Dorsolateral prefrontal cortex (tissue), 120 donors: ENCODE measurements at regions of chr13 and their contacts with region 1.

Region 1: DNA sequence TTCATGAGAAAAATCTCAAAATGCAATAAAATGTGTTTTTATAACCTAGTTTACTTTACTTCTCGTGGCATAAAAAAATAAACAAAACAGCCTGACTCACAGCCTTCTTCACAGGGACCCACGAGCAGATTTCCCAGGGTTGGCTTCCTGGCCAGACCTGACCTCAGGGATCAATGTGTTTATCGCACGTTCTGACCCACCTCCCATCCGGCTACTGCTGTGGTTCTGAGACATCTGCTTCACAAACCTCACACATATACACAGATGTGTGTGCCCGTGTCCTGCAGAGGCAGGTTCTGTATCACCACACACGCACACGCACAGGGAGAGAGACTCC is 118.3 kb downstream of the COL4A2 start:
- DNase-seq: no peak
- H3K4me3 ChIP-seq: no peak overlapping the region
- H3K27ac ChIP-seq: peak overlapping the region in 4 of 59 donors; percentile 4 to 42 (median 30)
- H3K27me3 ChIP-seq: no peaks in the 10 kb centered on the region
- CTCF ChIP-seq: no peak

Region 2: DNA sequence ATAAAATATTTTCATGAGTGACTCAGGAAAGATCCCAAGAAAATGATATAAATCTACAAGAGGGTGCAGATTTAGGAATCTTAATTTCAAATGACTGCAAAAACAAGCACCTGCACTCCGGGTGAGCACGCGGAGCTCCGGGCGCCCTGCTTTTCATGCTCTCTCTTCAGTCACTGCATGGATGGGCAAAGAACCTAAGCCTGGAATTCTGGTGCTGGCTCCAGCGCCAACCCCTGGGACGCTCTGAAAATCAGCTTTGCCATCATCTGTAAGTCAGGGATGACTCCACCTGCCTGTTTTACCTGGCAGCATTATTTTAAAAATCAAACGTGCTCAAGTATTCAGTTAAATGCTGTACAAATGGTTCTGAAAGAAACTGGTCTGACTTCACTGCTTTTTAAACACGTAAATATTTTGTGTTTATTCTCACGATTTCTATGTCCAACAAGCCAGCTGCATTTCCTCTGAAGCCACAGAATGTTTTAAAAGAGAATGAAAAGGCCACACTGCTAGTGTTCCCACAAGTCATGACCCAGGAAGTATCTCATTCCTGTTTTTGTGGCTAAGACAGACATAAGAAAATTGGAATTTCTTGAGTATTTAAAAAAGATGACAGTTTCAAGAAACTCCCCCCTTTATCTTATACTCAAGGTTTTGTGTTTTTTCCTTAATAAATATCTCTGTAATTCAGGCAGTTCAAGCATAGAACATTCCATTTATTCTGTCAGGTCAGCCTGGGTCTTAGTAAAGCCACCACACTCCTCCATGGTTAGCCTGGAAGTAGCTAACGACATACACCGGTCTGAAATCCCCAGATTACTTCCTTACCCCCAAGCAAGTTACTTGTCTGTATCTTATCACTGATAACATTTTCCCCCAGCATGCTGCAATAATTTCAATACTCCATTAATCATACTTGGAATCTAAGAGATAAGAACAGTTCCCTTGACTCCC is 199.5 kb before region 1 on chr13:
- intact Hi-C with region 1: no loop called
- DNase-seq: no peak
- H3K4me3 ChIP-seq: no peak overlapping the region
- H3K27ac ChIP-seq: peak overlapping the region in 4 of 59 donors; percentile 2 to 39 (median 28)
- H3K27me3 ChIP-seq: no peaks in the 10 kb centered on the region
- CTCF ChIP-seq: no peak

Region 3: GRCh38 chr13:110402344-110403069 is 22.9 kb before region 1 on chr13:
- intact Hi-C with region 1: loop called in 1 of 2 experiments (anchors 1 kb)
- DNase-seq: no peak
- H3K4me3 ChIP-seq: no peak overlapping the region
- H3K27ac ChIP-seq: no peak overlapping the region
- H3K27me3 ChIP-seq: no peaks in the 10 kb centered on the region
- CTCF ChIP-seq: no peak